ENCODE measurements at regions of chr4 and their contacts with region 1.

Region 1: DNA sequence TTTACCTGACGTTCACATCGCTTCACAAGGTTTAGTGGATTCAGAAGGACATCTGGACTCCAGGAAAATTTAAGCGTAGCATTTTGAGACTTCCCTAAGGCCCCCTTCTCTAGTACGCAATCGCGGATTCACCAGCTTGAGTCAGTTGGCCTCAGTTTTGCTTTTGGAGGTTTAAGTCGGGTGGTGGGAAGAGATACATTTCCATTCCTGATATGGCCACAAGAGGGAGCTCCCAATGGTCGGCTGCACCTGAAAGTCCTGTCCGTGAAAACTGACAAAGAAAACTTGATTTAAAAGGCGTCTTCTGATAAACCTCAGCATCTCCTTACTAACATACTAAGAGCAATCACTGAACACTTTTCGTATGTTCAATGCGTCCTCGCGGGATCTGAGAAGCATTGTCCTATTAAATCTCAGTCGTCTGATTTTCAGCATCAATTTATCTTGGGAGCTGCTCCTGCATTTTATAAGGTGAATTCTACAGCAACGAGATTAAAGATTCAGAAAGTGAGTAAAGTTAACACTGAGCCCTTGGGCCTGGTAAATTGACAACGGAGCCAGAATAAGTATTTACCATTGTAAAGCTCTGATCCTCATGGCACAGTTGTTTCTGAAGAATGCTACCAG is 50.6 kb downstream of the LGI2 start:
- DNase-seq: peak in 2 of 4 donors; percentile 44 to 67
- ATAC-seq: peak; percentile 88
- H3K4me3 ChIP-seq: peak overlapping the region in 1 of 2 donors; percentile 17
- H3K27ac ChIP-seq: peak overlapping the region; percentile 84
- H3K4me1 ChIP-seq: peaks cover 0 to 37% of the 10 kb centered on the region in 2 donors
- H3K27me3 ChIP-seq: no peaks in the 10 kb centered on the region
- CTCF ChIP-seq: peak; percentile 83 to 85

Region 2: GRCh38 chr4:24472514-24473308 is 507.5 kb before region 1 on chr4:
- intact Hi-C with region 1: loop called in 1 of 2 experiments (anchors 10 kb)
- DNase-seq: peak; percentile 78 to 90 (median 86)
- ATAC-seq: peak; percentile 84
- H3K4me3 ChIP-seq: peak overlapping the region; percentile 51
- H3K27ac ChIP-seq: peak overlapping the region; percentile 13 to 28
- H3K4me1 ChIP-seq: peaks cover 8 to 32% of the 10 kb centered on the region in 2 donors
- H3K27me3 ChIP-seq: peaks cover 23 to 82% of the 10 kb centered on the region in 2 donors
- CTCF ChIP-seq: peak; percentile 30 to 59

Measured in left lung (tissue), 14 donors.